AG04449 (cell line): ENCODE measurements at regions of chr19 and their contacts with region 1.

Region 1: GRCh38 chr19:4583961-4584669 is 24.6 kb upstream of the SEMA6B start:
- DNase-seq: no peak
- H3K4me3 ChIP-seq: peak overlapping the region; percentile 59
- CTCF ChIP-seq: no peak

Region 2: GRCh38 chr19:4493104-4493912 is 90.8 kb before region 1 on chr19:
- CTCF ChIA-PET with region 1: no interaction called
- POLR2A ChIA-PET with region 1: no interaction called
- DNase-seq: no peak
- H3K4me3 ChIP-seq: no peak overlapping the region
- CTCF ChIP-seq: no peak

Region 3: DNA sequence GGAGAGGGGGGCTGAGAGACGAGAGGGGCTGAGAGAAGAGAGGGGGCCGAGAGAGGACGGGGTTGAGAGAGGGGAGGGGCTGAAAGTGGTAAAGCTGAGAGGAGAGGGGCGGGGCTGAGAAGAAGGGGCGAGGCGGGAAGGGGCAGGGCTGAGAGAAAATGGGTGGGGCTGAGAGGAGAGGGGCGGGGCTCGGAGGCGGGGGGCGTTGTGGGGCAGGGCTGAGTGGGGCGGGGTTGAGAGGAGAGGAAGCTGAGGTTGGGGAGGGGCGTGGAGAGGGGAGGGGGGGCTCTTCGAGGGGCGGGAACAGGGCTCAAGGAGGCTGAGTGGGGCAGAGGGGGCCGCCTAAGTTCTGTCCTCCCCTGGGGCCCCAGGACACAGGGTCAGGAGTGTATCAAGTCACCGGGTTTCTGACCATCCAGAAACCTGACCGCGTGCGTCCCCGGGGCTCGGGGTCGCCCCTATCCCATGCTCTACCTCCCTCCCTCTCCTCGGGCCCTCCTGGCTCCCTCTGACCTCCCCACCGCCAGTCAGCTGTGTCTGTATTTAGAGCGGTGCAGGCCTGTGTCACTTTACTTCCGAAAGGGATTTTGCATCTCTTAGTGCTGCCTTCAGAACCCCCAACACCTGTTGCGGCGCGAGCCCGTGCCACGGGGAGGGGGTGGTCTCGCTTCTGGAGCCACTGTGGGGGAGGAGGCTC is 14.0 kb after region 1 on chr19:
- CTCF ChIA-PET with region 1: interaction called, 10 read pairs
- POLR2A ChIA-PET with region 1: interaction called, 3 read pairs
- DNase-seq: no peak
- H3K4me3 ChIP-seq: no peak overlapping the region; the same call in 1 of the 2 replicates
- CTCF ChIP-seq: no peak

Region 4: GRCh38 chr19:4660181-4660791 is 76.2 kb after region 1 on chr19:
- CTCF ChIA-PET with region 1: no interaction called
- POLR2A ChIA-PET with region 1: no interaction called
- DNase-seq: no peak
- H3K4me3 ChIP-seq: no peak overlapping the region
- CTCF ChIP-seq: peak; percentile 6